Naive thymus-derived CD4-positive, alpha-beta T cell (primary cell): ENCODE measurements at regions of chr17 and their contacts with region 1.

Region 1: DNA sequence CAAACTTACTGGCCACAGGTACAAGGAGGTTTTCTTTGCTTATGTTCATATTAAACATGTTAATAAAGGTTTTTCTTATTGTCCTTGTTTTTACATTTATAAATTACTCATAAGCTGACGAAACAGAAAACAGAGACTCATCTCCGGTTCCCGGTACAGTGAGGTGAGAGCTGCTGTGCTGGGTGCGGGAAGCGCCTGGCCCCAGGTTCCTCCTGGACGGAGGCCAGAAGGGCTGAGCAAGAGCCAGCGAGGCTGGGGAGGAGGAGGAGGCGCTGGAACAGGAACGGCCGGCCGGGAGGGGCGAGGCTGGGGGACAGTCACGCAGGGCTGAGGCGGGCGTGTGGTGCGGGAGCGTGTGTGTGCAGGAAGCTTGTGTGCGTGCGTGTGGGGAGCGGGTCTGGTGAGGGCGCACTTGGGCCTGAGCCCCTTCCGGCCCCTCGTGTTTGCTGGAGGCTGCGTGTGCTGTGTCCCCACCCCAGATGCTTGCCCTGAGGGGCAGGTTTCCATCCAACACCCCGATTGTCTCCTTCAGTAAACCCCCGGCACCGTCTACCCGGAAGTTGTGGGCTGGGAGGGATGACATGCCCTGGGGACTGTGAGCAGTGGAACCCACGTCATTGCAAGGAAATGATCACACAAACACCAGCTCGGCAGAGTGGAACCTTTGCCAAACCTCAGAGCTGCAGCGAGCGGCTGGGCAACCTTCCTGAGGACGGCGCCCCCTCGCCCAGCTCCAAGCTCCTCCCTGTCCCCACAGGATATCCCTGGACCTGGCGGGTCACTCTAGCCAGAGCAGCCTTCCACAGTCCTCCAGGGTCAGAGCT is 19.5 kb downstream of the CD7 start:
- DNase-seq: peak; percentile 68 to 99 (median 96)
- ATAC-seq: peak; percentile 86
- H3K4me3 ChIP-seq: peak overlapping the region; percentile 57
- H3K4me3 Mint-ChIP-seq: peak overlapping the region; percentile 92 to 99 (median 98)
- H3K27ac ChIP-seq: peak overlapping the region; percentile 98
- H3K27ac Mint-ChIP-seq: peak overlapping the region; percentile 100
- H3K4me1 ChIP-seq: peaks cover 61 to 65% of the 10 kb centered on the region in 2 donors
- H3K4me1 Mint-ChIP-seq: peaks cover 23 to 89% (median 76%) of the 10 kb centered on the region in 7 donors
- H3K27me3 ChIP-seq: no peaks in the 10 kb centered on the region
- H3K27me3 Mint-ChIP-seq: peaks cover 0 to 3% (median 0%) of the 10 kb centered on the region in 5 donors

Region 2: DNA sequence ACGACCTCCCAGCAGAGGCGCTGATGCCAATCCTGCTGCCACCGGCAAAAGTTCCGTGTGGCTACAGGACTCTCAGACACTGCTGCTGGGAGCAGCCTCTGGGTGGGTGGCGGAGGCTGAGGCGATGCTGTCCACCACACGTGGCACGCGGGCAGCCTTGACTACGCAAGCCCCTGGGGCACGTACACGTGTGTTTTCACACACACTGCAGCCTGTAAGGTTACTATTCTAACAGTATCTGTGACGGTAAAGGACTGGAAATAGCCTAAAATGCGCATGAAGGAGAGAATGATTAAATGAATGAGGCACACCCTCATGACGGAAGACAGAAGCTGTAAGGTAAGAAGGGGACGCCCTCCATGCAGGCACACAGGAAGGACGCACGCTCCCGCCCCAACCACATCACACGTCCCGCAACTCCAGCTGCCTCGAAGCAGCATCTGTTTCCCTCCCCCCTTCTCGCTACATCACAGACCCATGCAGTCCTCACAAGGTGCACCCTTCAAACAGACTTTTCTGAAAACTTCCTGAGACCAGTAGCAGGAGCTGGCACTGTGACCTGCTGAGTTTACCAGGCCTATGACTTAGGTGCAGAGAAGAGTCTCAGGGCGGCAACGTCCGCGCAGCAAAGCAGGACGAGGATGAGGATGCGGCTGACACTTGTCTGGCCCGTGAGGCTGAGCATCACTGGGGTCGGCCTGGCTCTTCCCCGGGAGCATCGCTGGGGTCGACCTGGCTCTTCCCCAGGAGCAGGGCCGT is 171.2 kb before region 1 on chr17:
- CTCF ChIA-PET with region 1: interaction called, 3 read pairs
- POLR2A ChIA-PET with region 1: interaction called, 9 read pairs
- intact Hi-C with region 1: loop called in 1 of 2 experiments (anchors 1 kb)
- DNase-seq: peak; percentile 51 to 99 (median 98)
- ATAC-seq: peak; percentile 92
- H3K4me3 ChIP-seq: peak overlapping the region; percentile 36
- H3K4me3 Mint-ChIP-seq: peak overlapping the region; percentile 71 to 87 (median 84)
- H3K27ac ChIP-seq: peak overlapping the region; percentile 97
- H3K27ac Mint-ChIP-seq: peak overlapping the region; percentile 93 to 100 (median 98)
- H3K4me1 ChIP-seq: peaks cover 36 to 78% of the 10 kb centered on the region in 2 donors
- H3K4me1 Mint-ChIP-seq: peaks cover 33 to 83% (median 65%) of the 10 kb centered on the region in 7 donors
- H3K27me3 ChIP-seq: no peaks in the 10 kb centered on the region
- H3K27me3 Mint-ChIP-seq: no peaks in the 10 kb centered on the region

Region 3: GRCh38 chr17:82230627-82231311 is 67.2 kb before region 1 on chr17:
- CTCF ChIA-PET with region 1: interaction called, 30 read pairs
- POLR2A ChIA-PET with region 1: interaction called, 12 read pairs
- intact Hi-C with region 1: loop called in 1 of 2 experiments (anchors 2 kb)
- DNase-seq: peak in 2 of 9 donors; percentile 47 to 82
- ATAC-seq: peak; percentile 58
- H3K4me3 ChIP-seq: peak overlapping the region; percentile 35
- H3K4me3 Mint-ChIP-seq: peak overlapping the region in 7 of 10 donors; percentile 74 to 96 (median 79)
- H3K27ac ChIP-seq: peak overlapping the region; percentile 57
- H3K27ac Mint-ChIP-seq: no peak overlapping the region
- H3K4me1 ChIP-seq: peaks cover 26 to 32% of the 10 kb centered on the region in 2 donors
- H3K4me1 Mint-ChIP-seq: peaks cover 6 to 23% (median 10%) of the 10 kb centered on the region in 7 donors
- H3K27me3 ChIP-seq: no peaks in the 10 kb centered on the region
- H3K27me3 Mint-ChIP-seq: no peaks in the 10 kb centered on the region

Region 4: DNA sequence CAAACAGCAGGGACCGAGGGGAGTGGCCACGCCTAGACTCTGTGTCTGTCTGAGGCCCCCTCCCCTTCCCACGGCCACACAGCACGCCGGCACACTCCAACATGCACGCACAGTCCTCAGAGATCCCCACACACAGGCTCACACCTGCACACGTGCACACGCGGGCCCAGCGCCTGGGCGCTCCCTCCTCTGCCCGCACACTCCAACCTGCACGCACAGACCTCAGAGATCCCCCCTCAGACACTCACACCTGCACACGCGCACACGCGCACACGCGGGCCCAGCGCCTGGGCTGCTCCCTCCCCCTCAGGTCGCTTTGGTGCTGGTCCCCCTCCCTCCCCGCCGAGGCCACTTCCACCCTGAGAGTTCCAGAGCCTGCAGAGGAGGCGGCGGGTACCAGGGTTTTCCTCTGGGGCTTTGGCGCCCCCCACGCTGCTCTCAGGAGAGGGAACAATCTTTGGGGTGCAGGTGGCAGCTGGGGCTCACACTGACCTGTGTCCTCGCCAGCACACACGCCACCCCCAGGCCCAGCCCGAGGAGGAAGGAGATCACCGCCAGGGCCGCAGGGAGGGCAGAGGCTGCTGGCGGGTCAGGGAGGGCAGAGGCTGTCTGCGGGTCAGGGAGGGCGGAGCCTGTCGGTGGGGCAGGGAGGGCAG is 17.9 kb after region 1 on chr17:
- CTCF ChIA-PET with region 1: interaction called, 61 read pairs
- POLR2A ChIA-PET with region 1: interaction called, 237 read pairs
- intact Hi-C with region 1: loop called (anchors 1 kb)
- DNase-seq: peak in 8 of 9 donors; percentile 48 to 72 (median 65)
- ATAC-seq: peak; percentile 63
- H3K4me3 ChIP-seq: peak overlapping the region; percentile 91
- H3K4me3 Mint-ChIP-seq: peak overlapping the region in 6 of 10 donors; percentile 88 to 99 (median 97)
- H3K27ac ChIP-seq: peak overlapping the region; percentile 91
- H3K27ac Mint-ChIP-seq: peak overlapping the region in 6 of 9 donors; percentile 77 to 97 (median 90)
- H3K4me1 ChIP-seq: peaks cover 10 to 13% of the 10 kb centered on the region in 2 donors
- H3K4me1 Mint-ChIP-seq: peaks cover 10 to 19% (median 15%) of the 10 kb centered on the region in 7 donors
- H3K27me3 ChIP-seq: no peaks in the 10 kb centered on the region
- H3K27me3 Mint-ChIP-seq: no peaks in the 10 kb centered on the region

Region 5: DNA sequence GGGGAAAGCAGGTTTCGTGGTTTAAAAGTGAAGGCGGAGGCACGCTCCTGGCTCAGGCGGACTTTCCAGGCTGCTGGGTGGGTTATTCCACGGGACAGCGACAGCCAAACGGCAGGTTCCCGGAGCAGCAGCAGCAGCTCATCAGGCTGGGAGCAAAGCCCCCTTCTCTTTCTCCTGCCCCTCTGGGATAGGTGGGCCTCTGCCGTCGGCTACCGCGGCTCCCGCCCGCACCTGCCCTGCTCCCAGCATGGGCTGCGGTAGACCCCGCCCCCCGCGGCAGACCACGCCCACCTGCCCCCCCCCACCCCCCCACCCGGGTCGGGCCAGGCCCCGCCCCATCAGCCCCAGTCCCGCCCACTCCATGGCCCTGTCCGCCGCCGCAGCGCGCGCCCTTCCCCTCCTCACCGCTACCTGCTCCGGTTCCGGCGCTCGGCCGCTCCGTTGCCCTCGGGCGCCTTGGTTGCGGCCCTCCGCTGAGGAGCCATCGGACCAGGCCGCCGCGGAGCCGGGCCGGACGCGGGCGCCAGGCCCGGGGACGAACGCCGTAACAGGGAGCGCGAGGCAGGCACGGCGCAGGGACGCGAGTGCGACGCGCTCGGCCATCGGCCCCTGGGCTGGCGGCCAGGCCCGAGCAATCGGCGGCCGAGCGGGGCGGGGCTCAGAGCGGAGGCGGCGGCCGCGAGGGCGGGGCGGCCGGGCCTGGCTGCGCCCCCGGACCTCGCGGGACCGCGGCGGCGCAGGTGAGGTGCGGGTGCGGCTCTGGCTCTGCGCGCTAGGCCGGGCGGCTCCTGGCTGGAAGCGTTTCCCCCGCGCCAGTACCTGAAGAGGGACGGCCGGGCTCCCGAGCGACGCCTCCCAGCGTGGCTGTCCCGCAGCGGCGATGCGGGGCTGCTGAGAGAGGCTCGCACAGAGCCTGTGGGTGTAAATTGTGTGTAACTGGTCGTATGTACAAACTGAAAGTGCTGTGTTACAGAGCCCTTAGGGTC is 120.4 kb after region 1 on chr17 and contains the starts of genes HEXD and OGFOD3:
- CTCF ChIA-PET with region 1: interaction called, 3 read pairs
- POLR2A ChIA-PET with region 1: interaction called, 10 read pairs
- intact Hi-C with region 1: loop called in 1 of 2 experiments (anchors 5 kb)
- DNase-seq: peak; percentile 78 to 96 (median 92)
- ATAC-seq: peak; percentile 94
- H3K4me3 ChIP-seq: peak within 1 kb of the TSS; percentile 89
- H3K4me3 Mint-ChIP-seq: peak within 1 kb of the TSS; percentile 78 to 89 (median 84)
- H3K27ac ChIP-seq: peak within 1 kb of the TSS; percentile 94
- H3K27ac Mint-ChIP-seq: peak within 1 kb of the TSS; percentile 80 to 92 (median 86)
- H3K4me1 ChIP-seq: peaks cover 5 to 20% of the 10 kb centered on the region in 2 donors
- H3K4me1 Mint-ChIP-seq: peaks cover 23 to 42% (median 31%) of the 10 kb centered on the region in 7 donors
- H3K27me3 ChIP-seq: no peaks in the 10 kb centered on the region
- H3K27me3 Mint-ChIP-seq: no peaks in the 10 kb centered on the region
- total RNA-seq, gene HEXD: 62.7 to 153 (median 66.9) TPM
- total RNA-seq, gene OGFOD3: 21.9 to 34.6 (median 32.3) TPM